SK-N-SH (cell line): ENCODE measurements at regions of chr2 and their contacts with region 1.

Region 1: DNA sequence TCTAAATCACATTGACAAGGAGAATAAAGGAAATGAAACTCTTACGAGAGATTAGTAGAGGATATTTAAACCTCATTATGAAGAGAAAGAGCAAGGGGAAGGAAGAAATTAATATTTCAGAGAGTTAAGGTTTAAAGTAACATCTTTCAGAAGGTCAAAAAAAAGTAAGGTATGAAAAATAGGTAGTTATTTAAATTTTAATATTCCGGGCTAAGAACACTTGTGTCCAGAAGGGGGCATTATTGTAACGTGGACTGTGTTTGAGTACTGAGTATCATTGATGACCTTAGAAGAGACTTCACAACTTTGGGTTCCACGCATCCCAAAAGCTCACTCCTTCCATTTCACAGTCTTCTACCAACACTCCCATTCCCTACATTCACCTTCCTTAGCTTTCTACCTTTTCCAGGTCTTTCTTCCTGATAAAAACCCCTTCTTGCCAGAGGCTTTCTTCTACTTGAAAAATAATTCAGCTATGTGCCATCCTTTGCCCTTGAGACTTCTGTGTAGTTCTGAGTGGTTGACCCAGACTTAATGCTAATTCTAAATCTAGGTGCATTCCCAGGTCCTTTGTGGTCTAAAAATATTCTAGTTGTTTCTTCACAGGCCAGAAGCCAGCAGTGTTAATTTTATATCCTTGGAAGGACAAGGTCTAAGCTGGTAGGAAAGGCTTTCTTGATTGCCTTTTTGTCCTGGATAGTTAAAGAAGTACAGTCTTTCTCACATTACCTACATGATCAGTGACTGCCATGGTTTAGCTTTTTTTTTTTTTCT is 16.5 kb downstream of the DYNC1I2 start:
- DNase-seq: peak; percentile 40
- H3K4me3 ChIP-seq: no peak overlapping the region; a peak in 1 of 4 replicates
- H3K27ac ChIP-seq: peak overlapping the region in 1 of 2 experiments; percentile 23; a peak in 1 of 4 replicates
- H3K4me1 ChIP-seq: peaks cover 0 to 43% of the 10 kb centered on the region in 2 experiments; a peak in 3 of 4 replicates
- H3K27me3 ChIP-seq: no peaks in the 10 kb centered on the region
- CTCF ChIP-seq: peak; percentile 65
- EP300 ChIP-seq: no peak
- RAD21 ChIP-seq: peak; percentile 63

Region 2: DNA sequence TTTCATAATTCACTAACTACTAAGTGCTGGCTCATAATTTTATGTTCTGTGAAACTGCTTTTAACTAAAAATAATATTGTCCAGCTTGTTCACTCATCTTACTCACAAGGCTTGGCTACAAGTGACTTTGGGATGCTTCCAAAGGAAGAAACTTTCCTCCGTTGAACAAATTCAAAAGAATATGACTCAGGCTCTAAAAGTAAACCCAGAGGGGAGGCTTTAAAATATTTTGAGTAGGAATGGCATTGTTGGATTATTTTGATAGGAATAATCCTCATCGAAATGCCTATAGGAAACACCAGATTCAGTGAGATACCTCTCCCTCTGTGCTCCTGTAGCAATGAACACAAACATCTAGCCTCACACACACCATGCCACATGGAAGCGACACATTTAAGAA is 517.8 kb before region 1 on chr2:
- CTCF ChIA-PET with region 1: no interaction called
- POLR2A ChIA-PET with region 1: no interaction called
- DNase-seq: no peak
- H3K4me3 ChIP-seq: no peak overlapping the region; a peak in 1 of 4 replicates
- H3K27ac ChIP-seq: peak overlapping the region in 1 of 2 experiments; percentile 73; a peak in 2 of 4 replicates
- H3K4me1 ChIP-seq: no peaks in the 10 kb centered on the region
- H3K27me3 ChIP-seq: no peaks in the 10 kb centered on the region
- CTCF ChIP-seq: no peak
- EP300 ChIP-seq: no peak
- RAD21 ChIP-seq: no peak

Region 3: DNA sequence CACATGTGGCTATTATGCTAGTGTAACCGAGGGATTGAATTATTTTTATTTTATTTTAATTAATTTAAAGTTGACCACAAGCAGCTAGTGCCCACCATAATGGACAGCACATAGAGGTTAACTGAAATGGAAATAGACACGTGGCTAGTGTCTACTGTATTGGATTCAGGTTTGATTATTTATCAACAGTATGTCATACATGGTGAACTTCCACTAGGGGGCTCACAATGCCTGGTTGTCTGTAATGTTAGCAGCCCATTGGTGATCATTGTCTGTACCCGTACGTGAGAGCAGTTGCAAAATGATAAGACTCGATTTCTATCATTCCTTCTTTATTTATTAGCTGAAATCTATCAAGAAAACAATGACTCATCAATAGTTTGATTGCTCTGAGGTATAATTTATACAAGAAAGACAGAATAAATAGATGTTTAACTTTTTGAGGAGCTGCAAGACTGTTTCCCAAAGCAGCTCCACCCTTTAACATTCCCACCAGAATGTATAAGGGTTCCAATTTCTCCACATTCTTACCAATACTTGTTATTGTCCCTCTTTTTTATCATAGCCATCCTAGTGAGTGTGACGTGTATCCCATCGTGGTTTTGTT is 104.9 kb before region 1 on chr2:
- CTCF ChIA-PET with region 1: interaction called, 12 read pairs
- POLR2A ChIA-PET with region 1: no interaction called
- DNase-seq: peak; percentile 74
- H3K4me3 ChIP-seq: 0 out of 4 replicates have a peak overlapping the region, but pooled peaks of 1 of the 2 experiments have one; percentile 16
- H3K27ac ChIP-seq: no peak overlapping the region
- H3K4me1 ChIP-seq: 0 out of 4 replicates have a peak, but pooled peaks cover 0 to 5% of the 10 kb centered on the region in 2 experiments
- H3K27me3 ChIP-seq: no peaks in the 10 kb centered on the region; the same call in 1 of the 2 replicates
- CTCF ChIP-seq: peak; percentile 83
- EP300 ChIP-seq: no peak
- RAD21 ChIP-seq: peak; percentile 78

Region 4: GRCh38 chr2:171688129-171688465 is 15.7 kb before region 1 on chr2:
- CTCF ChIA-PET with region 1: interaction called, 18 read pairs
- POLR2A ChIA-PET with region 1: interaction called, 6 read pairs
- DNase-seq: no peak
- H3K4me3 ChIP-seq: peak overlapping the region; percentile 83 to 96
- H3K27ac ChIP-seq: peak overlapping the region; percentile 79 to 95
- H3K4me1 ChIP-seq: peaks cover 7 to 8% of the 10 kb centered on the region in 2 experiments; a peak in 2 of 4 replicates
- H3K27me3 ChIP-seq: no peaks in the 10 kb centered on the region
- CTCF ChIP-seq: no peak; the same call in 1 of the 2 replicates
- EP300 ChIP-seq: no peak
- RAD21 ChIP-seq: no peak

Region 5: DNA sequence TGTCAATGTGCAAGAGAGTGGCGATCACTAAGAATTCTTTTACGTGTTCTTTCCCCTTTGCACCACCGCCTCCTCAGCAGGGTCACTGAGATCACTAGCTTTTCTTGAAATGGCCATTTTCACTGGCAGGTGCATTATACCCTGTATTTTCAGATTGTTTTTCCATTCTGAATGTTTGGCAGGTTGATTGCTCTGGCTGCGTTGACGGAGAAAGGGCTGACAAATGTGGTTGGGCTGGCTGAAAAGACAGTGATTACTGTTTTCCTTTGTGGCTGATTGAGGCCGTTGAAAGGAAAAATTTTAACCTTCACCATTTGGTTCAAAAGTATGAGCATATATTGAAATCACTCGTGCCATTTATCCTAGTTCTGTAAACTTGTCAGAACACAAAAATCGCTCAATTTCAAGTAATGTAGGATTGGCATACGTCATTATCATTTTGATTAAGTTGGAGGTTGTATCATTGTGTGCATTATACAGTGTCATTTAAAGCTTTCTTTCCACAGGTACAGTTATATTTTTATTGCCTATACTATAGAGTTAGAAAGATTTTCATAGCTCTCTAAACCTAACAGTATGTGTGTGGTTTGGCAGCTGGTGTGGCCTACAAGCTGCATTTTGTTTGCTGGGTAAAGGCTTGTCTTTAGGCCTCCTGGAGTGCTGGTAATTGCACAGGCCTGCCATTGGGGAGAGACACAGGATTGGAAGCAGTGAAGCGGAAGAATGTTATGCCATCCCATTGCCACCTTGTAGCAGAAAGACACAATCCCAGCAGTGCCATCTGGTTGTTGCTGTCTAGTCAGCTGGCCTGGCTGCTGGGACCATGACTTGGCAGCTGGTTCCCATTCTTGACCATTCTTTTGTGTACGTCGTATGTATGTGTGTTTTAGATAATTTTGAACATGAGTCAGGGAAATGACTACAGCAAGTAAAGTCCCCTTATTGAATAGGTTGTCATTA is 20.2 kb after region 1 on chr2:
- CTCF ChIA-PET with region 1: interaction called, 14 read pairs
- POLR2A ChIA-PET with region 1: no interaction called
- DNase-seq: peak; percentile 30
- H3K4me3 ChIP-seq: no peak overlapping the region
- H3K27ac ChIP-seq: peak overlapping the region in 1 of 2 experiments; percentile 44; a peak in 2 of 4 replicates
- H3K4me1 ChIP-seq: peaks cover 11 to 42% of the 10 kb centered on the region in 2 experiments; a peak in 3 of 4 replicates
- H3K27me3 ChIP-seq: no peaks in the 10 kb centered on the region
- CTCF ChIP-seq: no peak
- EP300 ChIP-seq: no peak
- RAD21 ChIP-seq: peak; percentile 62

Region 6: GRCh38 chr2:171855401-171855800 is 151.6 kb after region 1 on chr2:
- CTCF ChIA-PET with region 1: no interaction called
- POLR2A ChIA-PET with region 1: no interaction called
- DNase-seq: no peak
- H3K4me3 ChIP-seq: no peak overlapping the region
- H3K27ac ChIP-seq: no peak overlapping the region
- H3K4me1 ChIP-seq: no peaks in the 10 kb centered on the region; a peak in 1 of 4 replicates
- H3K27me3 ChIP-seq: no peaks in the 10 kb centered on the region
- CTCF ChIP-seq: no peak
- EP300 ChIP-seq: no peak
- RAD21 ChIP-seq: no peak

Region 7: DNA sequence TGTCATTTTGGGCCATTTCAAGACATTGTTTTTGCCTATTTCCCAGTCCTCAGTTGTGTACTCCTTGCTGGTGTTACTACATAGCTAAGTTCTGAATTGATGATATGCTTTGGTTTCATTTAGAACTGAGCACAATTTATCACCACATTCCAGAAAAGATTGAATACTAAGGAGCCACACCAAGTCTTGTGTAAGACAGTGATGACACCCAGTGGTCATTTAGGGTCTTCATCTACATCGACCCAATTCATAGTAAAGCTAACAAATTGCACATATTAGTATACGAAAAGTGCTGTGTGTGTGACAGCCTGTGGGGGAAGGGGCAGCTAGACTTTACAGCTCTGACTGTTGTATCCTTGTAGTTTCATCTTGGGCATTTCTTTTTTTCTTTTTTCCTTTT is 409.9 kb after region 1 on chr2:
- CTCF ChIA-PET with region 1: interaction called, 96 read pairs
- POLR2A ChIA-PET with region 1: interaction called, 3 read pairs
- DNase-seq: peak; percentile 49
- H3K4me3 ChIP-seq: no peak overlapping the region
- H3K27ac ChIP-seq: no peak overlapping the region
- H3K4me1 ChIP-seq: peaks cover 0 to 1% of the 10 kb centered on the region in 2 experiments; a peak in 1 of 4 replicates
- H3K27me3 ChIP-seq: no peaks in the 10 kb centered on the region
- CTCF ChIP-seq: peak; percentile 58
- EP300 ChIP-seq: no peak
- RAD21 ChIP-seq: peak; percentile 69